ENCODE measurements at regions of chr2 and their contacts with region 1.

Region 1: GRCh38 chr2:70086838-70087701 is at the start of gene PCBP1:
- DNase-seq: peak; percentile 98
- ATAC-seq: peak; percentile 62 to 85 (median 71)
- H3K4me3 ChIP-seq: peak within 1 kb of the TSS; percentile 94
- H3K4me3 Mint-ChIP-seq: peak within 1 kb of the TSS; percentile 98
- H3K27ac ChIP-seq: peak within 1 kb of the TSS; percentile 98
- H3K27ac Mint-ChIP-seq: peak within 1 kb of the TSS; percentile 99 to 100
- H3K4me1 ChIP-seq: peaks cover 63% of the 10 kb centered on the region
- H3K4me1 Mint-ChIP-seq: peaks cover 79 to 81% of the 10 kb centered on the region in 2 donors
- H3K27me3 ChIP-seq: no peaks in the 10 kb centered on the region
- H3K27me3 Mint-ChIP-seq: no peaks in the 10 kb centered on the region
- CTCF ChIP-seq: no peak
- total RNA-seq, gene PCBP1: 329 to 358 (median 352) TPM

Region 2: GRCh38 chr2:70069049-70069448 is 18.0 kb before region 1 on chr2:
- intact Hi-C with region 1: loop called (anchors 1 kb)
- DNase-seq: peak; percentile 58 to 93
- ATAC-seq: peak; percentile 84 to 93 (median 84)
- H3K4me3 ChIP-seq: no peak overlapping the region
- H3K4me3 Mint-ChIP-seq: peak overlapping the region; percentile 47
- H3K27ac ChIP-seq: peak overlapping the region; percentile 87
- H3K27ac Mint-ChIP-seq: peak overlapping the region; percentile 88 to 94
- H3K4me1 ChIP-seq: peaks cover 31% of the 10 kb centered on the region
- H3K4me1 Mint-ChIP-seq: peaks cover 31 to 35% of the 10 kb centered on the region in 2 donors
- H3K27me3 ChIP-seq: no peaks in the 10 kb centered on the region
- H3K27me3 Mint-ChIP-seq: no peaks in the 10 kb centered on the region
- CTCF ChIP-seq: no peak

Region 3: DNA sequence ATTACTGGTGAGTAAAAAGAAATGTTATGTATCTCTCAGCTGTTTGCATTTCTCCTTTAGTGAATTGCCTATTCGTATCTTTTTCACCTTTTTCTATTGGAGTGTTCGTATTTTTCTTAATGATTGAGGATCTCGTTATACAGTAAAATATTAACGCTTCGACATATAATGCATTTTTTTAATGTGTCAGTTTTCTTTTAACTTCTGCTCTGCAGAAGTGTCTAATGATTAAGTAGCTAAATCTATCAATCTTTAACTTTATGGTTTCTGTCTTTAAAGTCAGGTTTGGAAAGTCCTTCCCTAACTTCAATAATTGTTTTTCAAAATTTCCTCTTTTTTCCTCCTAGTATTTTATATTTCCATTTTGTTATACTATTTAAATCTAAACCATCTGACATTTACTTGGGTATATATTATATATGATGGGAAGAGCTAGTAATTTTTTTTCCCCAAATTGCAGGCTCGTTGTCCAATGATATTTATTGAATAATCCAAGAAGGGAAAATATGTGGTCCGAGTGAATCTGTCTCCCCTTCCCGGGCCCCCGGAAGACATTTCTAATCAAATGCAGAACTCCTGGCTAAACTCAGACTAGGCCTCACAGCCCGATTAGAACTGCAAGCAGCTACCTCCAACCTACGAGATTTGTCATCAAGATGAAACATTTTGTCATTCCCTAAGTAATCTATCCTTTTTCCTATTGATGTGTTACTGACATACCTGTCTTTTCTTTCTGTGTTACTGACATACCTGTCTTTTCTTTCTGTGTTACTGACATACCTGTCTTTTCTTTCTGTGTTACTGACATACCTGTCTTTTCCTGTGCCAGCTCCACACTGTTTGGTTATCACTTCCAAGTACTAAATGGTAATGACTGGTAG is 17.4 kb after region 1 on chr2:
- intact Hi-C with region 1: loop called (anchors 1 kb)
- DNase-seq: peak in 1 of 2 donors; percentile 56
- ATAC-seq: no peak
- H3K4me3 ChIP-seq: peak overlapping the region; percentile 4
- H3K4me3 Mint-ChIP-seq: peak overlapping the region; percentile 86
- H3K27ac ChIP-seq: peak overlapping the region; percentile 84
- H3K27ac Mint-ChIP-seq: peak overlapping the region; percentile 91 to 97
- H3K4me1 ChIP-seq: peaks cover 53% of the 10 kb centered on the region
- H3K4me1 Mint-ChIP-seq: peaks cover 41 to 48% of the 10 kb centered on the region in 2 donors
- H3K27me3 ChIP-seq: no peaks in the 10 kb centered on the region
- H3K27me3 Mint-ChIP-seq: no peaks in the 10 kb centered on the region
- CTCF ChIP-seq: no peak

Region 4: GRCh38 chr2:70132244-70133126 is 45.4 kb after region 1 on chr2:
- intact Hi-C with region 1: loop called (anchors 2 kb)
- DNase-seq: peak in 1 of 2 donors; percentile 76
- ATAC-seq: peak; percentile 39 to 65 (median 46)
- H3K4me3 ChIP-seq: peak overlapping the region; percentile 34
- H3K4me3 Mint-ChIP-seq: peak overlapping the region; percentile 86
- H3K27ac ChIP-seq: peak overlapping the region; percentile 94
- H3K27ac Mint-ChIP-seq: peak overlapping the region; percentile 93 to 98
- H3K4me1 ChIP-seq: peaks cover 76% of the 10 kb centered on the region
- H3K4me1 Mint-ChIP-seq: peaks cover 65 to 73% of the 10 kb centered on the region in 2 donors
- H3K27me3 ChIP-seq: no peaks in the 10 kb centered on the region
- H3K27me3 Mint-ChIP-seq: no peaks in the 10 kb centered on the region
- CTCF ChIP-seq: no peak